Activated CD4-positive, alpha-beta T cell treated with anti-CD3 and anti-CD28 coated beads, Interleukin-2, amount 10 ng/mL, durations not matched to agents 7 days and 5 days (primary cell): ENCODE measurements at regions of chr19 and their contacts with region 1.

Region 1: GRCh38 chr19:2977001-2977685 is at the start of gene TLE6:
- DNase-seq: peak; percentile 96
- H3K4me3 Mint-ChIP-seq: peak within 1 kb of the TSS; percentile 93
- H3K27ac Mint-ChIP-seq: peak within 1 kb of the TSS; percentile 94
- H3K4me1 Mint-ChIP-seq: peaks cover 20% of the 10 kb centered on the region
- H3K27me3 Mint-ChIP-seq: peaks cover 11% of the 10 kb centered on the region
- total RNA-seq, gene TLE6: 1.2 to 1.6 TPM

Region 2: DNA sequence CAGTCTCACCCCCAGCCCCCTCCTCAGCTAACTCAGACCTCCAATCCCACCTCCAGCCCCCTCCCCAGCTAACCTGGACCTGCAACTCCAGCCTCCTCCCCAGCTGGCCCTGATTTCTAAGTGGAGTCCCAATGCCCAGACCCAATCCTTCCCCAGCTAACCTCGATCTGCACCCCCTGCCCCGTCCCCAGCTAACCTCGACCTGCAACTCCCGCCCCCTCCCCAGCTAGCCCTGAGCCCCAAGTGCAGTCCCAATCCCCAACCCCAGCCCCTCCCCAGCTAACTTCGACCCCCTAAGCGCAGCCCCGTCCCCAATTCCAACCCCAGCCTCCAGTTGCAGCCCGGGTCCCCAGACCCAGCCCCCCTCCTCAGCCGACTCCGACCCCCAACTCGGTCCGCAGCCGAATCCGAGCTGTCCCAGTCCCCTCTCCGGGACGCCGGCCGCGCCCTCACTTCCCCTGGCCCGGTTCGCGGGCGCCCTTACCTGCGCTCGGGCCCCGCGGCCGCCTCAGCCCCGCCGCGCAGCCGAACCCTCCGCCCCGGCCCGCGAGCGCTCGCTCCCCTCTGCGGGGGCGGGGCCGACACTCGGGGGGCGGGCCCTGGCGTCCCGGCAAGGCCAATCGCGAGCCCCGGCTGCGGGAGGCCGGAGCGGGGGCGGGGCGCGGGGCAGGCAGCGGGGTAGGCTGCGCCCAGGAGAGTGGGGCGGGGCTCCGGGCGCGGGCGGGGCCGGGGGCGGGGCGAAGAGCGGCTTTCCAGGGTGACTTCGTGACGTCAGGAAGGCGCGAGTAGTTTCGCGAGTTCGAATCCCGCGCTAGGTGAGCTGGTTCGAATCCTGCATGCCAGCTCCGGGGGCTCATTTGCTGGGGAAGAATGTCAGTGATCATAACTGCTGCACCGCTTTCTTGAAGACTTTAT is 274.7 kb before region 1 on chr19 and contains the start of gene GNG7:
- CTCF ChIA-PET with region 1: no interaction called
- POLR2A ChIA-PET with region 1: no interaction called
- DNase-seq: peak; percentile 92
- H3K4me3 Mint-ChIP-seq: peak within 1 kb of the TSS; percentile 61
- H3K27ac Mint-ChIP-seq: peak within 1 kb of the TSS; percentile 19
- H3K4me1 Mint-ChIP-seq: peaks cover 16% of the 10 kb centered on the region
- H3K27me3 Mint-ChIP-seq: peaks cover 4% of the 10 kb centered on the region
- total RNA-seq, gene GNG7: 1.1 to 1.2 TPM

Region 3: GRCh38 chr19:2923510-2923909 is 53.6 kb before region 1 on chr19:
- CTCF ChIA-PET with region 1: no interaction called
- POLR2A ChIA-PET with region 1: no interaction called
- DNase-seq: no peak
- H3K4me3 Mint-ChIP-seq: no peak overlapping the region
- H3K27ac Mint-ChIP-seq: no peak overlapping the region
- H3K4me1 Mint-ChIP-seq: no peaks in the 10 kb centered on the region
- H3K27me3 Mint-ChIP-seq: no peaks in the 10 kb centered on the region

Region 4: GRCh38 chr19:3065675-3066357 is 88.7 kb after region 1 on chr19:
- CTCF ChIA-PET with region 1: no interaction called
- POLR2A ChIA-PET with region 1: interaction called, 10 read pairs
- DNase-seq: no peak
- H3K4me3 Mint-ChIP-seq: no peak overlapping the region
- H3K27ac Mint-ChIP-seq: no peak overlapping the region
- H3K4me1 Mint-ChIP-seq: peaks cover 22% of the 10 kb centered on the region
- H3K27me3 Mint-ChIP-seq: no peaks in the 10 kb centered on the region